Activated T-helper 2 cell treated with anti-CD3 and anti-CD28 coated beads, Interferon-gamma antibody, Interleukin-2, Interleukin-4, amounts not matched to agents 10 μg/mL and 5 μg/mL and 100 μg/mL, durations not matched to agents 14 hours and 24 hours and 36 hours (primary cell): ENCODE measurements at regions of chr17 and their contacts with region 1.

Region 1: GRCh38 chr17:74296548-74296936 is 22.5 kb downstream of the DNAI2 start:
- DNase-seq: peak; percentile 32
- H3K4me3 Mint-ChIP-seq: no peak overlapping the region
- H3K27ac Mint-ChIP-seq: no peak overlapping the region
- H3K4me1 Mint-ChIP-seq: peaks cover 23% of the 10 kb centered on the region
- H3K27me3 Mint-ChIP-seq: peaks cover 4% of the 10 kb centered on the region

Region 2: DNA sequence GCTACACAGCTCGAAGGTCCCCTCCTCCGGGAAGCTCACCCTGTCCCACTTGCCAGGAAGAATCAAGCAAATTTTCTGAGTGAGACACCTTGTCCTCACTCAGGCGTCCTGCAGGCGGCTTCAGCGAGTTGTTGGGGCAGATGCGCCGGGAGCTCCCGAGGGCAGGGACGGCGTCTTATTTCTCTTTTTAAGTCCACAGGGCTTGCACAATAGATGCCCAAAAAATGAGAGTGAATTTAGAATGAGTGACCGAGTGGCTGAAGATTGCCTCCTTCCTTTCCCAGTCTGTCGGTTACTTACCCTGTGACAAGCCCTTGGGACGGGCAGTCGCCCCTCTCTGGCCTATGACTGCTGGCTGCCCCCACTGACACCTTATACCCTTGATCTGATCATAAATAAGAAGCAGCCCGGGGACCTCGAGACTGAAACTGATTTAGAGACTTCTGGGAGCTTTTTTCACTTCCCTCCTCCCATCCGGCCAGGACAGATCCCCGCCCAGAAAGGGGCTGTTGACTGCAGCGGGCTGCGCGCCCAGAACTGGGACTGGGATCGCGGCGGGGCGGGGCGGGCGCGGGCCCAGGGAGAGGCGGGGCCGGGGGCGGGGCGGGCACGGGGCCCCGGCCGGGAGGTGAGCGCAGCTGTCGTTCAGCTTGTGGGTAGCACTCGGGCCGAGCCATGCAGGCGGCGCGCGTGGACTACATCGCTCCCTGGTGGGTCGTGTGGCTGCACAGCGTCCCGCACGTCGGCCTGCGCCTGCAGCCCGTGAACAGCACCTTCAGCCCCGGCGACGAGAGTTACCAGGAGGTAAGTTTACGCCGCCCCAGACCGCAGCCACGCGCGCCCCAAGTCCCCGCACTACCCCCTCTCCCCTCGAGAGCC is 83.4 kb before region 1 on chr17 and contains the start of gene TTYH2:
- intact Hi-C with region 1: loop called (anchors 2 kb)
- DNase-seq: peak; percentile 75
- H3K4me3 Mint-ChIP-seq: peak within 1 kb of the TSS; percentile 86
- H3K27ac Mint-ChIP-seq: peak within 1 kb of the TSS; percentile 77
- H3K4me1 Mint-ChIP-seq: peaks cover 43% of the 10 kb centered on the region
- H3K27me3 Mint-ChIP-seq: no peaks in the 10 kb centered on the region
- total RNA-seq, gene TTYH2: 17.0 and 19.6 TPM in 2 replicates

Region 3: DNA sequence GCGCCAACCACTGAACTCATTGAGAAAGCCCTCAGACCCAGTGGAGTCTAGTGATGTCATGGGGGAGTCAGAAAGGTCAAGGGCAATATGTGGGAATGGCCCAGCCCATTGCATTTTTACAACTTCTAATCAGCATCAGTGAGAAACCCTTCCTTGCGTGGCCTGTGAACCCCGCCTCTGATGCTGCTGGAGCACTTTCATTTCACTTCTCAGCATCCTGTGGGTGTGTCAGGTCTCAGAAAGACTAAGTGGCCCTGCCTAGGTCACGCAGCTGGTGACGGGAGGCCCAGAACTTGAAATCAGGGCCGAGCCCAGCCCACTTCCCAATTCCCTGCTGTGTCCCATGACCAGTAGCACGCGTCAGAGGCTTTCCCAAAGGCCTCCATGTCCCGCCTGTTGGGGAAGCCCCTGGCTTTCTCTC is 16.4 kb before region 1 on chr17:
- intact Hi-C with region 1: loop called (anchors 1 kb)
- DNase-seq: peak; percentile 69
- H3K4me3 Mint-ChIP-seq: peak overlapping the region; percentile 9
- H3K27ac Mint-ChIP-seq: peak overlapping the region; percentile 90
- H3K4me1 Mint-ChIP-seq: peaks cover 50% of the 10 kb centered on the region
- H3K27me3 Mint-ChIP-seq: no peaks in the 10 kb centered on the region

Region 4: DNA sequence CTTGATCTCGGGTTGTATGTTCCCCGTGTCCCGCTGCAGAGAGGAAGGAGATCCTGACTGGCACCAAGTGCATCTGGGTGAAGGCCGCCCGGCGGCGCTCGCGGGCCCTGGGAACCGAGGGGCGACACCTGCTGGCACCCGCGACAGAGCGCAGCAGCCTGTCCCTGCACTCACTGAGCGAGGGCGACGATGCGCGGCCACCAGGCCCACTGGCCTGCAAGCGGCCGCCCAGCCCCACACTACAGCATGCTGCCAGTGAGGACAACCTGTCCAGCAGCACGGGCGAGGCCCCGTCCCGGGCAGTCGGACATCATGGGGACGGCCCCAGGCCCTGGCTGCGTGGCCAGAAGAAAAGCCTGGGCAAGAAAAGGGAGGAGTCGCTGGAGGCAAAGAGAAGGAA is 57.6 kb after region 1 on chr17:
- intact Hi-C with region 1: loop called (anchors 1 kb)
- DNase-seq: peak; percentile 55
- H3K4me3 Mint-ChIP-seq: no peak overlapping the region
- H3K27ac Mint-ChIP-seq: no peak overlapping the region
- H3K4me1 Mint-ChIP-seq: peaks cover 7% of the 10 kb centered on the region
- H3K27me3 Mint-ChIP-seq: peaks cover 56% of the 10 kb centered on the region

Region 5: DNA sequence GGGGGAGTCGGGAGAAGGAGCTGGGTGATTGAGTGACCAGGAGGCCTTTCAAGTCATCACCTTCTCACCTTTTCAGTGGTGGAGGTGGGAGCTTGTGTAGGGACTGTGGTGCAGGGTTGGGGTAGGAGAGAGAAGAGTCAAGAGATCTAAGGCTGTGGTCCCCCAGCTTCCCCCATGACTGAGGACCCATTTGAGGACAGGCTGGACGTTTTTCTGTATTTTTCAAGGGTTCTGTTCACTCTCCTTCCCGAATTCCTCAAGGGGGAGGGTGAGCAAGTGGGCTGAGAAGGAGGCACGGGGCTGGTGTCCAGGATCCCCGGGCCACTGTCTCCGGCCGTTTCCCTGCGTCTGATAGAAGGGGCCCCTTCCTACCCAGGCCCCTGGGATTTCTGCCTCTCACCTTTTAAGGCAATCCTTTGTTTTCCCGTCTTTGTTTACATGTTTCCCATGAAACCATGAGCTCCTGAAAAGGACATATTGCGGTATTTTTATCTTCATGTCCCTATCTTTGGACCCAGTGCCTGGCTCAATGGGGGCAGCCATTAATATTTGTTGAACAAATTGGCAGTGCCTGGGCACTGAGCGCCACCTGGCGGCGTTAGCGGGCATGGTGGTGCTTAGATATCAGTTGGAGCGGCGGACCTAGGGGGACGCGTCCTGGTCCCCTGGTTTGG is 160.7 kb after region 1 on chr17:
- intact Hi-C with region 1: loop called (anchors 5 kb)
- DNase-seq: peak; percentile 44
- H3K4me3 Mint-ChIP-seq: no peak overlapping the region
- H3K27ac Mint-ChIP-seq: no peak overlapping the region
- H3K4me1 Mint-ChIP-seq: peaks cover 21% of the 10 kb centered on the region
- H3K27me3 Mint-ChIP-seq: peaks cover 4% of the 10 kb centered on the region